ENCODE measurements at regions of chr1 and their contacts with region 1.

Region 1: GRCh38 chr1:166975361-166976129 is at the start of gene ILDR2:
- DNase-seq: peak; percentile 68
- ATAC-seq: peak; percentile 56
- total RNA-seq, gene ILDR2: 6.7 TPM

Region 2: DNA sequence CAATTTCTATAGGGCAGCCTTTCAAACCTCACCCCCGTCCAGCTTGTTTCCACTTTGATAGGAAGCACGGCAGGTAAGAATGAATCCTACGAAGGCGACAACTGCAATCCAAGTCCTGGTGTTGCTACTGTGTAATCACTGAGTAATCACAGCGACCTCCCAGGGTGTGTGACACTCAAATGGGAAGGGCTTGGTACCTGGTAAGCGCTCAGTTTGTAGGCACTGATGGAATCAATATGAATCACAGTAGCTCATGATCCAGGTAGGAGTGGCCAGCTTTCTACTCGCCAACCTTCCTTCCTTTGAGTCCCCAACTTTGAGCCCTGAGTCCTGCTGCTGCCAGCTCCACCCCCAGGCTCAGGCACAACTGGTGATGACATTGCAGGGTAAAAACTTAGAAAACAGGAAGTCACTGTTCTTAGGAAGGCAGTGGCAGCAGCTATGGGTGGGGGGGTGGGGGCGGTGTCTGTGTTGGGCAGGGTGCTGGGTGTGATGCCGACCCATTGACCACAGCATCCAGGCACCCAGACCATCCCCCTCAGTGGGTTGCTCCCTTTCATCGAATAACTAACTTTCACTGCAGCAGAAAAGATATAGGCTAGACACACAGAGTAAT is 472.1 kb after region 1 on chr1:
- intact Hi-C with region 1: loop called (anchors 5 kb)
- DNase-seq: no peak
- ATAC-seq: peak; percentile 70

Measured in sciatic nerve (tissue), 2 donors.